ENCODE measurements at regions of chr12 and their contacts with region 1.

Region 1: DNA sequence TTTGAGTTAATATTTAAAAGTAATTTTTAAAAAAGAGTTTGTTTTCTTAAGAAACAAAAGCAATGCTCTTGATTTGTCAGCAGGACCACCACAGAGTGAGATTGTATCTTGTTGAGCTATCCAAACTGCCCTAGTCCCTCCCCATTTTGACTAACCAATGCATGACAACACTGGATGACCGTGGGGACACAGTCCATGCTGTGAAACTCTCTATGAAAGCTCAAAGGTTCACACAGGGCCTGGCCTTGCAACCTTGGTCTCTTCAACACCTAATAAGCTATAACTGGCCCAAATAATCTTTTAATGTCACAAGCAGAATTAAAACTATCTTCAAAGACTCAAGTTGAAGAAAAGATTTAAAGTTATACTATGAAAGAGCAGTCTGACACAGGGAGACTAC is 13.5 kb downstream of the ETFRF1 start:
- DNase-seq: no peak
- H3K4me3 Mint-ChIP-seq: no peak overlapping the region
- H3K27ac Mint-ChIP-seq: peak overlapping the region; percentile 16
- H3K4me1 Mint-ChIP-seq: no peaks in the 10 kb centered on the region
- H3K27me3 Mint-ChIP-seq: no peaks in the 10 kb centered on the region
- CTCF ChIP-seq: no peak

Region 2: DNA sequence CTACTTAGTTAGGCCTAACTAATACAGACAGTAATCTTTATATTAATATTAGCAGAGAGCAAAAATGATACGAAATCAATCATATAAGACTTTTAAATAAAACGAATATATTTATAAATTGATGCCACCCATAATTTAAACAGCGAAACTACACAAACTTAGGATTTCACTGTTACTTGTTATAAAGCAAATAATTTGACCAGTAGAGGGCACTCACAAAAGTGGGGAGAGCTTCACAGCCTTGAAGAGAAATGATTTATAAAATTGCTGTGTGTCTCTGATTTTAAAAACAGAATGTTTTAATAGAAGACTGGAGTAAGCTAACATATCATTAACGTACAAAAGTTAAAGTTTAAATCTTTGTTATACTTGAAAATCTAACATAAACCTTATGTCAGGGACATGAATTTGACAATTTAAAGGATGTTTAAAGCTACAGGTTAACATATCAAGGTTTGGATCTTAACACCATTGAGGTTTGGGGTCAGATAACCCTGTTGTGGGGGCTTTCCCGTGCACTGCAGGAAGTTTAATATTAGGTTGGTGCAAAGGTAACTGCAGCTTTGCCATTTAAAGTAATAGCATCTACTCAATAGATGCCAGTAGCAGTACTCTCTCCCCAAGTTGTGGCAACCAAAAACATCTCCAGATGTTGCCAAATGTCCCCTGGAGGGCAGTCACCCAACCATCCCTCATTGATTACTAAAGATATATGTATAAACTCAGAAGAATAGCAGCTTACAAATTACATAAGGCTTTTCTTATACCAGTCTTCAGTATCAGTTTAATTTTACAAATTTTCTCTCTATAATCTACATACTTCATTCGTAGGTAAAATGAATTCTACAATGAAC is 32.8 kb after region 1 on chr12:
- CTCF ChIA-PET with region 1: interaction called, 6 read pairs
- POLR2A ChIA-PET with region 1: interaction called, 3 read pairs
- intact Hi-C with region 1: loop called (anchors 2 kb)
- DNase-seq: peak; percentile 48
- H3K4me3 Mint-ChIP-seq: no peak overlapping the region
- H3K27ac Mint-ChIP-seq: no peak overlapping the region
- H3K4me1 Mint-ChIP-seq: peaks cover 4% of the 10 kb centered on the region
- H3K27me3 Mint-ChIP-seq: no peaks in the 10 kb centered on the region
- CTCF ChIP-seq: peak; percentile 55

Measured in MCF 10A (cell line).